Panc1 (cell line): ENCODE measurements at regions of chr22 and their contacts with region 1.

Region 1: GRCh38 chr22:41815716-41816115 is 15.2 kb downstream of the CCDC134 start:
- DNase-seq: no peak
- ATAC-seq: no peak
- H3K4me3 ChIP-seq: no peak overlapping the region
- H3K27ac ChIP-seq: no peak overlapping the region
- H3K4me1 ChIP-seq: no peaks in the 10 kb centered on the region
- H3K27me3 ChIP-seq: no peaks in the 10 kb centered on the region
- CTCF ChIP-seq: no peak

Region 2: DNA sequence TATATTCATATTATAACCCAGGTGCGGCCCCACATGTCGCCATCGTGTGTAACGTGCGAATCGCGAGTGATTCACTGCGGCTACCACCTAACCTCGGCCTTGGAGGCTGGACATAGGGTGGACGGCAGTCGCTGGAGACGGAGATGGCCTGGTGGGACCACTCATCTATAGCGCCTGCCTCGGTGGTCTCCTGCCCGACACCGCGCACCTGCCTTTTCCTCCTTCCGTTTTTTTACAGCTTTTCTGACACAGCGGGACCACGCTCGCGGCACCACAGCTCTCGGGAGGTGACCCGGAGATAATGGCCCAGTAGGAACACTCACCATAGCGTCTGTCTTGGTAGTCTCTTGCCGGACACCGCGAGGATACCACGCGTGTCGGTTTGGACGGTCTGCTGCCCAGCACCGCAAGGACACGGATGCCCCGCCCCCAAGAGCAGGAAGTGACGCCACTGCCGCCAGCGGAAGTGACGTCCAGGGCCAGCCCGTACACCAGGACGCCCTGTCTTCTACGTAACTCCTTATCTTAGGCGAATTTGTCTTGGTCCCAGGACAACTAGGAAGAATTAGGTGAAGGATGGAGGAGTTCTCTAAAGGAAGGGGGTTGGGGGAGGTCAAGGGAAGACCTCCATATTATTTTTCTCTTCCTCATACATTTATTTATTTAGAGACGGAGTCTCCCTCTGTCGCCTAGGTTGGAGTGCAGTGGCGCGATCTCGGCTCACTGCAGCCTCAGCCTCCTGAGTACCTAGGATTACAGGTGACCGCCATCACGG is 133.5 kb before region 1 on chr22:
- CTCF ChIA-PET with region 1: no interaction called
- POLR2A ChIA-PET with region 1: no interaction called
- in situ Hi-C with region 1: no loop called
- intact Hi-C with region 1: no loop called
- DNase-seq: no peak
- ATAC-seq: no peak
- H3K4me3 ChIP-seq: peak overlapping the region in 1 of 2 experiments; percentile 28; a peak in 1 of 4 replicates
- H3K27ac ChIP-seq: no peak overlapping the region
- H3K4me1 ChIP-seq: no peaks in the 10 kb centered on the region; the same call in 1 of the 2 replicates
- H3K27me3 ChIP-seq: no peaks in the 10 kb centered on the region
- CTCF ChIP-seq: no peak

Region 3: GRCh38 chr22:41826430-41827383 is 11.0 kb after region 1 on chr22:
- CTCF ChIA-PET with region 1: no interaction called
- POLR2A ChIA-PET with region 1: interaction called, 15 read pairs
- in situ Hi-C with region 1: no loop called
- intact Hi-C with region 1: no loop called
- DNase-seq: no peak
- ATAC-seq: no peak
- H3K4me3 ChIP-seq: no peak overlapping the region
- H3K27ac ChIP-seq: no peak overlapping the region
- H3K4me1 ChIP-seq: peaks cover 5% of the 10 kb centered on the region
- H3K27me3 ChIP-seq: no peaks in the 10 kb centered on the region
- CTCF ChIP-seq: no peak